ENCODE measurements at regions of chr14 and their contacts with region 1.

Region 1: DNA sequence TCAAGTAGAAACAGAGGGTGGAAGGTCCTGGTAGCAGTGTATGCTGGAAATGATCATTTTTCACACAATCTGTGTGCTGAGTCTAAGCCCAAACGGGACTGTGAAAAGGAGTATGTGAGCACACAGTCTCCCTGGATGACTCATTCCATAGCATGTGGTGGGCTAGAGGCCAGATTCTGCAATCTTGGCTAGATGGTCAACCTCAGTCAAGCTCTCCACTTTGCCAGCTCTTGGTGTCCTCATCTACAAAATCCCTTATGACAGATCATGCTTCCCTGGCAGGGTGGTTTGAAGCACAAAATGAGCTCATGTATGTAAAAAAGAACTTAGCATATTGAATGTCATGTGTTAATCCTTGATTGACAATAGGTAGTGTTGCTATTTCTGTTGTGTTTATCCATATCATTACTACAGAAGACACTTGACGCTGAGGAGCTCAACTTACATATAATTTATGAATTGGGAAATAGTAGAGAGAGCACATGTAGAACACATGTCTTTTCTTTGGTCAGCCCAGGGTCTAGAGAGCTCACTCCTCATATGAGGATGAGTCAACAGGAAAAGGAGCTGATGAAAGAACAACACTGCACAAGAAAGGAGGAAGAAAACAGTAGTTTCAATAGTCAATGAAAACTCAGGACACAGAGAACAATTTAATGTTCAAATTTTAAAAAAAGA is 517.5 kb downstream of the BCL11B start:
- DNase-seq: peak; percentile 85
- H3K4me3 Mint-ChIP-seq: no peak overlapping the region
- H3K27ac Mint-ChIP-seq: peak overlapping the region; percentile 88
- H3K4me1 Mint-ChIP-seq: peaks cover 15% of the 10 kb centered on the region
- H3K27me3 Mint-ChIP-seq: no peaks in the 10 kb centered on the region
- CTCF ChIP-seq: no peak

Region 2: GRCh38 chr14:98692857-98693256 is 61.6 kb before region 1 on chr14:
- CTCF ChIA-PET with region 1: no interaction called
- POLR2A ChIA-PET with region 1: no interaction called
- intact Hi-C with region 1: no loop called
- DNase-seq: peak; percentile 17
- H3K4me3 Mint-ChIP-seq: no peak overlapping the region
- H3K27ac Mint-ChIP-seq: no peak overlapping the region
- H3K4me1 Mint-ChIP-seq: no peaks in the 10 kb centered on the region
- H3K27me3 Mint-ChIP-seq: no peaks in the 10 kb centered on the region
- CTCF ChIP-seq: no peak

Region 3: DNA sequence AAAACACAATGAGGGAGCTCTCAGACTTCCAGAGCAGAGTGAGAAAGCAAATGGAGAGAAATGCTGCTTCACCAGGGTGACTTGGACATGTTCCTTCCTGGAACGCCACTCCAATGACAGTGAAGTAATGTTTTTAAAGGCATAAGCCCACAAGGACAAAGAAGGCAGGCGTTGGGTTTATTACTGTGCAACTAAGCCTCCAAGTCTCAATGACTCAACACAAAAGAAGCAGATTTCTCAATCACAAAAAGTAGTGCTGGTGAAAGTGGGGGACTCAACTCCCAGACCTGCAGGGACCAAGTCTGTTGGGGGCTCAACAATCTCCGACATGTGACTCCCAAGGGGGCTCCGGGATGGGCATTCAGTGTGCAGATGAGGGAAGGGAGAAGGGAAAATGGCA is 12.3 kb after region 1 on chr14:
- CTCF ChIA-PET with region 1: interaction called, 4 read pairs
- POLR2A ChIA-PET with region 1: interaction called, 12 read pairs
- intact Hi-C with region 1: no loop called
- DNase-seq: peak; percentile 39
- H3K4me3 Mint-ChIP-seq: no peak overlapping the region
- H3K27ac Mint-ChIP-seq: peak overlapping the region; percentile 17
- H3K4me1 Mint-ChIP-seq: peaks cover 15% of the 10 kb centered on the region
- H3K27me3 Mint-ChIP-seq: no peaks in the 10 kb centered on the region
- CTCF ChIP-seq: no peak

Region 4: DNA sequence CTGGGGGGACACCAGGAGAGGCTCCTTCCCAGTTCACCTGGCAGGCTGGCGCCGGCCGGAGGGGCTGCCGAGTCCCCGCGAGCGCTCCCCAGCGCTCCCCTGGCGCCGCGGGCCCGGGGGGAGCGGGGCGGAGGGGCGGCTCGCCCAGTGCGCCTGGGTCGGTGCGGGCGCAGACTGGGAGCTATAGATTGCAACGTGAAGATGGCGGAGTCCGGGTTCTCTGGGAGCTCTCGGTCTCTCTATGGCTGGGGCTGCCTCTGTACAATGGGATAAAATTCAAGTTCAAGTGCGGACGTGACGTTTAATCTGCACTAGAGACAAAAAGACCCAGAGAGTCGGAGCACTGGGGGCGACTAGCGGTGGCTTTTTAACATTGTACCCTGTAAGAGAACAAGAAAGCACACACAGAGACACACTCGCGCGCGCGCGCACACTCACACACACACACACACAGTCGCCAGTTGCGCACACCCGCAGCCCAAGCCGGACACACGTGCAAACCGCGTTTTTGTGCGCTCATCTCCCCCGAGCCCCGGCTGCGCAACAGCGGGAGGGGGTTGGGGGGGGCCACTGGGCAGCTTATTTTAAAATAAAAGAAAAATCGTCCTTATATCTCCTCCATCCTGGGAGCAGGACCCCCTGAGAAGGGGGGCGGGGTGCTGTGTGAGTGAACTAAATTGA is 517.6 kb after region 1 on chr14 and contains the start of gene BCL11B:
- CTCF ChIA-PET with region 1: interaction called, 3 read pairs
- POLR2A ChIA-PET with region 1: no interaction called
- intact Hi-C with region 1: loop called (anchors 5 kb)
- DNase-seq: peak; percentile 86
- H3K4me3 Mint-ChIP-seq: peak within 1 kb of the TSS; percentile 72
- H3K27ac Mint-ChIP-seq: peak within 1 kb of the TSS; percentile 36
- H3K4me1 Mint-ChIP-seq: peaks cover 14% of the 10 kb centered on the region
- H3K27me3 Mint-ChIP-seq: peaks cover 19% of the 10 kb centered on the region
- CTCF ChIP-seq: peak; percentile 50
- total RNA-seq, gene BCL11B: 0.84 and 1.4 TPM in 2 replicates